PC-9 (cell line): ENCODE measurements at regions of chr15 and their contacts with region 1.

Region 1: DNA sequence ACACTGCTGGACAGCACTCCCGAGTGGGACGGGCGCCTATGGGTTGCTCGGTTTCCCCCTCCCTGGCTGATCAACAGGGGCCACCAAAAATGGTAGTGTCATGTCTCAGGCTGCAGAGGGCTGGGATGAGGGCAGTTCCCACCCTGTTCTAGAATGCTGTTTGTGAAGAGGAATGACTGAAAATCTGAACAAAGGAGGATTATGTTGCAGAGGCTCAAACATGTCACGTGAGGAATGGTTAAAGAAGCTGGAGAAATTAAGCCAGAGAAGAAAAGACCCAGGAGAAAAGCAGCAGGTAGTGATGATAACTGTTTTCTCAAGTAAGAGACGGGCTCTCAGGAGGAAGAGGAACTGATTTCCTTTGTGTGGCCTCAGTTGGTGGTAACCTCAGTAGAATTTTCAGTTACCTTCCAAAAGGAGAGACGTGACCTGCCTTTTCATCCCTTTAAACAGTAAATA is 10.4 kb downstream of the SPG21 start:
- DNase-seq: no peak
- H3K4me3 ChIP-seq: no peak overlapping the region
- H3K27ac ChIP-seq: no peak overlapping the region
- H3K4me1 ChIP-seq: no peaks in the 10 kb centered on the region
- H3K27me3 ChIP-seq: no peaks in the 10 kb centered on the region
- CTCF ChIP-seq: no peak

Region 2: DNA sequence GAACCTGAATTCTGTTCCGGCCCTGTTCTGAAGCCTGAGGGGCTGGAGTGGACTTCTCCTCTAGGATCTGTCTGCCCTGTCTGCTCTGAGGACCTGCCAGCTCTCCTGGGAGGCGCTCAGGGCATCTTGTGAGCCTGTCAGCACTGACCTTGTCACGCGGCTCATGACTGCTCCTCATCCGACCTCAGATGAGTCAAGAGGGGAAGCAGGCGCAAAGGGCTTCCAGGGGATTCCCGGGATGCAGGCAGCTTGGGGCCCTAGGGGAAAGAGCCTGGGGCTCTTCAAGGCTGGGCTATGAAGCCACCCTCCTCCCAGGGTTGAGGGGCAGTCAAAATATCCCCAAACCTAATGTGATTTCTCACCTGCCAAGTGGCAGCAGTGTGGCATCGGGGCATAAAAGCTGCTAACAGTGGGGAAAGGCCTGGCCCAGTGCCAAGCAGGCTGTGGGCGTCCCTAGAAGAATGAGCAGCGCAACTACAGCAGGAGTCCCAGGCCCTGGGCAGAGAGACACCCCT is 95.2 kb before region 1 on chr15:
- CTCF ChIA-PET with region 1: interaction called, 13 read pairs
- POLR2A ChIA-PET with region 1: no interaction called
- intact Hi-C with region 1: no loop called
- DNase-seq: peak; percentile 56 to 69
- H3K4me3 ChIP-seq: no peak overlapping the region
- H3K27ac ChIP-seq: peak overlapping the region; percentile 34
- H3K4me1 ChIP-seq: peaks cover 12% of the 10 kb centered on the region
- H3K27me3 ChIP-seq: no peaks in the 10 kb centered on the region
- CTCF ChIP-seq: no peak